ENCODE measurements at regions of chr3 and their contacts with region 1.

Region 1: DNA sequence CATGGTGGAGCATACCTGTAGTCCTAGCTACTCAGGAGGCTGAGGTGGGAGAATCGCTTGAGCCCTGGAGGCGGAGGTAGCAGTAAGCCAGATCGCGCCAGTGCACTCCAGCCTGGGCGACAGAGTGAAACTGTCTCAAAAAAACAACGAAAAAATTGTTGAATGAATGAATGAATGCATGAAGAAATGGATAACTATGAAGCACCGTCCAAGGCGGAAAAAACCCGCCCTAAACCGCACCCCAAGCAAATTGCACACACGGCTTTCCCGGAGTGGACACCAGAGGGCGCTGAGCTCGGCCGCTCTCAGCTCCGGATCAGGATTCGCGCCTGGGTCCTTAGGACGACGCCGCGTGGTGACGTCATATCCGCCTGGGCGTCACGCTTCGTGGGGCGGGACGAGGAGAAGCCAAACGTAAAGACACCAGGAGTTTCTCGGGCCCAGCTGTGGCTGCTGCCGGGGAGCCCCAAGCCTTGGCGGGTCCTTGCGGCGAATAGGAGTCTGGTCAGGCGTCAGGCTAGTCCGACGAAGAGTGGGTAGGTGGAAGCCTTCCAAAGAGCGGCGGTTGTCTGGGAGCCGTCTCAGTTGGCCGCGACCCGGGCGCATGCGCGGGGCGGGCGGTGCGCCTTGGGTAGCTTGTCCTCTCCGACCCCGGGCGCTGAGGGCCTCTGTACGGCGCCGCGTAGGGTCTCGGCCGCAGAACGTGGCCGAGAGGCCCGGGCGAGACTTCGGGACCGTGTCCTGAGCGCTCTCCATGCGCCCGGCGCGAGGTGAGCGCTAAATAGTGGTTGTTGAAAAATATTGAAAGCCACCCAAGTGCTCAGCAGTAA is at the starts of genes HTD2 and RPP14:
- DNase-seq: peak; percentile 96 to 99 (median 98)
- ATAC-seq: peak; percentile 95
- H3K4me3 ChIP-seq: peak within 1 kb of the TSS; percentile 90
- H3K4me3 Mint-ChIP-seq: peak within 1 kb of the TSS; percentile 94 to 99 (median 97)
- H3K27ac ChIP-seq: peak within 1 kb of the TSS; percentile 98
- H3K27ac Mint-ChIP-seq: peak within 1 kb of the TSS; percentile 99 to 100 (median 99)
- H3K4me1 ChIP-seq: peaks cover 21 to 24% of the 10 kb centered on the region in 2 donors
- H3K4me1 Mint-ChIP-seq: peaks cover 28 to 47% (median 36%) of the 10 kb centered on the region in 7 donors
- H3K27me3 ChIP-seq: no peaks in the 10 kb centered on the region
- H3K27me3 Mint-ChIP-seq: peaks cover 5 to 13% (median 8%) of the 10 kb centered on the region in 5 donors
- total RNA-seq, gene HTD2: 4.5 to 10.6 (median 9.2) TPM
- total RNA-seq, gene RPP14: 14.8 to 21.6 (median 17.6) TPM

Region 2: GRCh38 chr3:56682462-56683121 is 1623.5 kb before region 1 on chr3:
- CTCF ChIA-PET with region 1: no interaction called
- POLR2A ChIA-PET with region 1: no interaction called
- intact Hi-C with region 1: loop called in 1 of 2 experiments (anchors 2 kb)
- DNase-seq: peak; percentile 70 to 84 (median 79)
- ATAC-seq: peak; percentile 81
- H3K4me3 ChIP-seq: peak overlapping the region; percentile 93
- H3K4me3 Mint-ChIP-seq: peak overlapping the region; percentile 88 to 100 (median 94)
- H3K27ac ChIP-seq: peak overlapping the region; percentile 92
- H3K27ac Mint-ChIP-seq: peak overlapping the region; percentile 90 to 100 (median 94)
- H3K4me1 ChIP-seq: peaks cover 33 to 34% of the 10 kb centered on the region in 2 donors
- H3K4me1 Mint-ChIP-seq: peaks cover 28 to 55% (median 48%) of the 10 kb centered on the region in 7 donors
- H3K27me3 ChIP-seq: no peaks in the 10 kb centered on the region
- H3K27me3 Mint-ChIP-seq: no peaks in the 10 kb centered on the region

Region 3: GRCh38 chr3:57597122-57597923 is 708.8 kb before region 1 on chr3 and contains the start of gene ARF4:
- CTCF ChIA-PET with region 1: no interaction called
- POLR2A ChIA-PET with region 1: no interaction called
- intact Hi-C with region 1: loop called in 1 of 2 experiments (anchors 1 kb)
- DNase-seq: peak; percentile 99 to 100 (median 100)
- ATAC-seq: peak; percentile 93
- H3K4me3 ChIP-seq: peak within 1 kb of the TSS; percentile 86
- H3K4me3 Mint-ChIP-seq: peak within 1 kb of the TSS; percentile 91 to 99 (median 98)
- H3K27ac ChIP-seq: peak within 1 kb of the TSS; percentile 94
- H3K27ac Mint-ChIP-seq: peak within 1 kb of the TSS; percentile 95 to 100 (median 99)
- H3K4me1 ChIP-seq: peaks cover 29 to 30% of the 10 kb centered on the region in 2 donors
- H3K4me1 Mint-ChIP-seq: peaks cover 33 to 64% (median 51%) of the 10 kb centered on the region in 7 donors
- H3K27me3 ChIP-seq: no peaks in the 10 kb centered on the region
- H3K27me3 Mint-ChIP-seq: no peaks in the 10 kb centered on the region
- total RNA-seq, gene ARF4: 50.9 to 85.5 (median 57.5) TPM

Region 4: GRCh38 chr3:58188173-58188564 is 117.9 kb before region 1 on chr3:
- CTCF ChIA-PET with region 1: interaction called, 5 read pairs
- POLR2A ChIA-PET with region 1: no interaction called
- intact Hi-C with region 1: loop called (anchors 1 to 2 kb)
- DNase-seq: no peak
- ATAC-seq: no peak
- H3K4me3 ChIP-seq: no peak overlapping the region
- H3K4me3 Mint-ChIP-seq: no peak overlapping the region
- H3K27ac ChIP-seq: no peak overlapping the region
- H3K27ac Mint-ChIP-seq: no peak overlapping the region
- H3K4me1 ChIP-seq: no peaks in the 10 kb centered on the region
- H3K4me1 Mint-ChIP-seq: peaks cover 0 to 3% (median 0%) of the 10 kb centered on the region in 7 donors
- H3K27me3 ChIP-seq: no peaks in the 10 kb centered on the region
- H3K27me3 Mint-ChIP-seq: no peaks in the 10 kb centered on the region

Region 5: DNA sequence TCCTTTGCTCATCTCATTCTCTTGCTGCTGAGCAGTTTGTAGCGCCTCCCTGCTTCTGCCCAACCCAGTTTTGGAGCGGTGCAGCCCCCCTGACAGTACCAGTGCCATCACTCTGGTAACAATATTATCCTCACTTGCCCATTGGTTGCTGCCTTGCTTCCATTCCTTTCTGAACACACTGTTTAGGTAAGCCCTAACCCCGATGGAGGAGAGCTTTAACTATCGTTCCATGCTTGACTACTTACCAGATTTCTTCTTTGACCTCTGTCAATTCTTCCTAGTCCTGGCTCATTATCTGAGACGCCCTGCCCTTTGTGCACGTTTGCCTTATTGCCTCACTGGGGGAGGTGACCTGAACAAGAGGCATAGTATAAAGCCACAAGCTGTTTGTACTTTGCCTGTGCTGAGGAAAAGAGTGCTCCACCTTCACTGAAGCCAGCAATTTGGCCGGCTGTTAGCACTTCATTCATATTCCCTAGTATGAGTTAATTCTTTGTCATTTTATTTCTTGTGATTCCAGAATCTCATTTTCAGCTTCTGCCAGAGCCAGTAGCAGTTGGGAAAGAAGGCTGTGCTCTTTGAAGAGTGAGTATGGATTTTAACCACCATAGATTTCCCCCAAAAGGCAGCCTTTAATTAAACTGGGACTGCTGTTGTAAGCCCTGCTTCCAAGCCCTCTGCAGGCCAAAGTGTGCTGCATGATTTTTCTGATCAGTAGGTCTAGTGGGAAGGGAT is 56.6 kb before region 1 on chr3:
- CTCF ChIA-PET with region 1: no interaction called
- POLR2A ChIA-PET with region 1: no interaction called
- intact Hi-C with region 1: no loop called
- DNase-seq: no peak
- ATAC-seq: no peak
- H3K4me3 ChIP-seq: no peak overlapping the region
- H3K4me3 Mint-ChIP-seq: no peak overlapping the region
- H3K27ac ChIP-seq: no peak overlapping the region
- H3K27ac Mint-ChIP-seq: no peak overlapping the region
- H3K4me1 ChIP-seq: no peaks in the 10 kb centered on the region
- H3K4me1 Mint-ChIP-seq: peaks cover 0 to 4% (median 0%) of the 10 kb centered on the region in 7 donors
- H3K27me3 ChIP-seq: no peaks in the 10 kb centered on the region
- H3K27me3 Mint-ChIP-seq: no peaks in the 10 kb centered on the region

Region 6: GRCh38 chr3:58324391-58325390 is 18.6 kb after region 1 on chr3:
- CTCF ChIA-PET with region 1: interaction called, 42 read pairs
- POLR2A ChIA-PET with region 1: interaction called, 5 read pairs
- intact Hi-C with region 1: no loop called
- DNase-seq: peak in 1 of 9 donors; percentile 26
- ATAC-seq: peak; percentile 27
- H3K4me3 ChIP-seq: no peak overlapping the region
- H3K4me3 Mint-ChIP-seq: peak overlapping the region in 1 of 10 donors; percentile 24
- H3K27ac ChIP-seq: peak overlapping the region; percentile 14
- H3K27ac Mint-ChIP-seq: peak overlapping the region in 8 of 9 donors; percentile 25 to 85 (median 68)
- H3K4me1 ChIP-seq: no peaks in the 10 kb centered on the region
- H3K4me1 Mint-ChIP-seq: peaks cover 0 to 25% (median 18%) of the 10 kb centered on the region in 7 donors
- H3K27me3 ChIP-seq: no peaks in the 10 kb centered on the region
- H3K27me3 Mint-ChIP-seq: no peaks in the 10 kb centered on the region

Region 7: GRCh38 chr3:58433400-58434169 is 127.5 kb after region 1 on chr3 and contains the start of gene PDHB:
- CTCF ChIA-PET with region 1: interaction called, 6 read pairs
- POLR2A ChIA-PET with region 1: interaction called, 18 read pairs
- intact Hi-C with region 1: loop called (anchors 1 kb)
- DNase-seq: peak; percentile 78 to 91 (median 90)
- ATAC-seq: peak; percentile 98
- H3K4me3 ChIP-seq: peak within 1 kb of the TSS; percentile 92
- H3K4me3 Mint-ChIP-seq: peak within 1 kb of the TSS; percentile 90 to 98 (median 95)
- H3K27ac ChIP-seq: peak within 1 kb of the TSS; percentile 81
- H3K27ac Mint-ChIP-seq: peak within 1 kb of the TSS; percentile 94 to 98 (median 97)
- H3K4me1 ChIP-seq: peaks cover 14 to 15% of the 10 kb centered on the region in 2 donors
- H3K4me1 Mint-ChIP-seq: peaks cover 15 to 34% (median 27%) of the 10 kb centered on the region in 7 donors
- H3K27me3 ChIP-seq: no peaks in the 10 kb centered on the region
- H3K27me3 Mint-ChIP-seq: peaks cover 0 to 9% (median 0%) of the 10 kb centered on the region in 5 donors
- total RNA-seq, gene PDHB: 30.1 to 58.1 (median 54.0) TPM

Region 8: DNA sequence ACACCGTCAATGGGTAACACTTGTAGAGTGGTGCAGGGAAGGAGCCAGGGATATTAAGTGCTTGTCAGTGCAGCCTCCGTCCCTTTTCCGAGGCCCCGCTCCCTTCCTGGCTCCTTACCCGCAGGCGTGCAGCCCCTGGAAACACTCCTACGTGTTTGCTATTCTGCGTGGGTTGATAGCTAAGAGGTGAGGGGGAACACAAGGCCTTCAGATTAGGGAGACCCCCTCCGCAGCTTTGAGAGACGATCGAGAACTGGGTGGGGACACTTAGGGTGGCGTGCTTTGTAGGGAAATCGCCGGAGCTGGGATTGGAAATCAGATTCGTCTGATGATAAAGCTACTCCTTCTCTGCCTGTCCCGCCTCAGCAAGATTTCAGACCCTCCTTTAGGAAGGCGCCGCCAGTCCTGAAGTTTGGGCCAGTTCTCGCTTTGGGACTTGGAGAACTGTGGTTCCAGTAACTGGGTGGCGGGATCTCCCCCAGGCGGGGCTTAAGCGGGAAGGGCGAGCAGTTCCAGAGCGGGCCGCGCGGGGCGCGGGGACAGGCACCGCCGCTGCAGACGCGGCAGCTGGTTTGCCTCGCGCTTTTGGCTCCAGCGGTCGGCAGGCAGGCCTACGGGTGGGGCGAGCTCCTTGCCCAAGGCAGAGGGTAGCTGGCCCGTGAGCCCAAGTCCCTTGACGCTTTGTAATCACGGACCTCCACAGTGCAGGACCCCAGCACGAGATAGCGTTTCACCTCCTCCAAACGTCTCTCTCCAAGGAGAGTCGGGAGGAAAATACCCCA is 279.1 kb after region 1 on chr3:
- CTCF ChIA-PET with region 1: no interaction called
- POLR2A ChIA-PET with region 1: no interaction called
- intact Hi-C with region 1: loop called in 1 of 2 experiments (anchors 5 kb)
- DNase-seq: peak in 8 of 9 donors; percentile 17 to 60 (median 21)
- ATAC-seq: peak; percentile 92
- H3K4me3 ChIP-seq: peak overlapping the region; percentile 80
- H3K4me3 Mint-ChIP-seq: peak overlapping the region; percentile 90 to 93 (median 91)
- H3K27ac ChIP-seq: no peak overlapping the region
- H3K27ac Mint-ChIP-seq: peak overlapping the region in 3 of 9 donors; percentile 36 to 79 (median 48)
- H3K4me1 ChIP-seq: peaks cover 0 to 6% of the 10 kb centered on the region in 2 donors
- H3K4me1 Mint-ChIP-seq: peaks cover 10 to 20% (median 15%) of the 10 kb centered on the region in 7 donors
- H3K27me3 ChIP-seq: peaks cover 4 to 7% of the 10 kb centered on the region in 2 donors
- H3K27me3 Mint-ChIP-seq: peaks cover 34 to 59% (median 51%) of the 10 kb centered on the region in 5 donors